Activated B cell treated with CpG ODN at 0.5 μM for 24 hours (primary cell): ENCODE measurements at regions of chr11 and their contacts with region 1.

Region 1: GRCh38 chr11:119084663-119085436 is at the start of gene HMBS:
- DNase-seq: peak; percentile 92
- ATAC-seq: peak; percentile 90
- H3K4me3 Mint-ChIP-seq: peak within 1 kb of the TSS; percentile 95
- H3K27ac Mint-ChIP-seq: peak within 1 kb of the TSS; percentile 93
- H3K4me1 Mint-ChIP-seq: peaks cover 12% of the 10 kb centered on the region
- H3K27me3 Mint-ChIP-seq: no peaks in the 10 kb centered on the region
- CTCF ChIP-seq: no peak
- total RNA-seq, gene HMBS: 17.5 and 26.9 TPM in 2 replicates

Region 2: DNA sequence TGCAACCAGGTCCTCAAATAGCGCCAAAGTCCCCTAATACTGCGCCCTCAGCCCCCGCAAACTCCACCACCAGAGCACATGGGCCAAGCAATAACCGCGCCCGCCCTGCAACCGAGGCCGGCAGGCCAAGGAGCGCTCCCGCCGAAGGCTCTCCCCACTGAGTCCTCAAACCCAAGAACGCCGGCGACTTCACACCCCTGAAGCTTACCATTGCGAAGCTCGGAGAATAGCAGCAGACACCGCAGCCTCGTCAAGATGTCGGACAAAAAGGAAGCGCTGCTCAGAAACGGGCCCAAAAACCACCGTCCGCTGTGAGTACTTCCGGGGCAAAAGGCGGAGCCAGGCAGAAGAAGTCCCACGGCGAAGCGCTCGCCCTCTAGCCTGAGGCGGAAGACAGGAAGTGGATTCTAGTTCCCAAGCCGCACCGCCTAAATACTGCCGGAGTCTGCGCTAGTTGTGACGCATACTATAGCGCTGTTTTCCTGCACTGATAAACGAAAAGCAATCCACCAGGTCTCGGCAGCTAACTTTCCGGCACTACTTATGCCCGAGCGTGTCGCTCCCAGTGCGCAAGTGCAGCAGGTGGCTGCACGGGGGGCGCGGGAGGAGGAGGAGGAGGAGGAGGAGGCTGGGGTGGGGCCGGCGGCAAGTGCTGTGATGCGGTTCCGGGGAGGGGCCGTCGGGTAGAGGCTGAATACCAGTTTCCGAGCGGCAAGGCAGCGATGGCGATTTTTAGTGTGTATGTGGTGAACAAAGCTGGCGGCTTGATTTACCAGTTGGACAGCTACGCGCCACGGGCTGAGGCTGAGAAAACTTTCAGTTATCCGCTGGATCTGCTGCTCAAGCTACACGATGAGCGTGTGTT is 66.5 kb before region 1 on chr11 and contains the starts of genes RPS25 and TRAPPC4:
- CTCF ChIA-PET with region 1: no interaction called
- POLR2A ChIA-PET with region 1: interaction called, 12 read pairs
- intact Hi-C with region 1: loop called (anchors 1 kb)
- DNase-seq: peak; percentile 90
- ATAC-seq: peak; percentile 87
- H3K4me3 Mint-ChIP-seq: peak within 1 kb of the TSS; percentile 99
- H3K27ac Mint-ChIP-seq: peak within 1 kb of the TSS; percentile 100
- H3K4me1 Mint-ChIP-seq: peaks cover 54% of the 10 kb centered on the region
- H3K27me3 Mint-ChIP-seq: no peaks in the 10 kb centered on the region
- CTCF ChIP-seq: no peak
- total RNA-seq, gene RPS25: 2,191 and 2,534 TPM in 2 replicates
- total RNA-seq, gene TRAPPC4: 56.8 and 60.1 TPM in 2 replicates